Right ventricle myocardium inferior (tissue), 1 donor: ENCODE measurements at regions of chr2 and their contacts with region 1.

Region 1: DNA sequence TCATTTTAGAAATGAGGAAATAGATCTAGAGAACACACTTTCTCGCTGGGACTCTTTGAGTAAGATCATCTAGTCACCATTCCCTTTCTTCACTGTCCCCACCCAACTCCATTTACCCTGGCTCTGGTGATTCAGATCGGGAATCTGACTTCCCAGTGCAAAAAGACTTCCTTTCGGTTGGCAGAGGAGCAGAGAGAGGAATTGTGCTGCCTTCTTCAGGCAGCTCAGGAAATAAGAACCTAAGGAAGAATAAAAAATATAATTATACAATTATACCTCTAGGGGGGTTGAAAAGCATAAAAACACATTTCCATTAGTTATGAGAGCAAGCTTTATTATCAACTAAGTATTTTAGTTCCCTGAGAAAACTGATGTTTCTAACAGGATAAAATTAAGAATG is 9.3 kb upstream of the MPP4 start:
- DNase-seq: no peak
- ATAC-seq: no peak

Region 2: DNA sequence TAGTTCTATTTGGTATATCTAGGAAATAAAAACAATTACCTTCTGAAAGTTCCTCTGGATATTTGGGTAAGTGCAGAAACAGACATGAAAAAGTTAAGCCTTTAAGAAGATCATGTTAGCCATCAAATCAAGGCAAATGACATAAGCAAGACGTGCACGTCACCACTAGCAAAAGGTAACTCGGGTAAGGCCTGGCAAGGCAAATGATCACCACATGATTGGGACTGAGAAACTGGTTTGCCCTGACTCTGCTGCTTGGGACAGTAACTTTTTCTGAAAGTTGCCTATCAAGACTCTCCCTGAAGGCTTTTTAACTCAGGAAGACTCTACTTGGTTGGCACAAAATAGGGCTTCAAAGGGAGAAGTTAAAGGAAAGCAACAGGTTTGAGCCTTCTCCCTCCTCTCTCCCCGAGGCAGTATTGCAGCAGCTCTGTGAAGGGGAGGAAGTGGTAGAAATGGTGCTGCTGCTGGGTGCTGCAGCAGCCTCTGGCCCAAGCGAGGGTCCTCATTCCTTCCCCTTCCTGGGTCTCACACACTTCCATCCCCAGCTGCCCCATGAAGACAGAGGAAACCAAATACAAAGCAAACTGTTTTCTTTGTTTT is 47.4 kb before region 1 on chr2:
- intact Hi-C with region 1: no loop called
- DNase-seq: no peak
- ATAC-seq: no peak

Region 3: GRCh38 chr2:201735486-201735885 is 27.7 kb after region 1 on chr2:
- intact Hi-C with region 1: loop called (anchors 5 kb)
- DNase-seq: no peak
- ATAC-seq: no peak